ENCODE measurements at regions of chr3 and their contacts with region 1.

Region 1: DNA sequence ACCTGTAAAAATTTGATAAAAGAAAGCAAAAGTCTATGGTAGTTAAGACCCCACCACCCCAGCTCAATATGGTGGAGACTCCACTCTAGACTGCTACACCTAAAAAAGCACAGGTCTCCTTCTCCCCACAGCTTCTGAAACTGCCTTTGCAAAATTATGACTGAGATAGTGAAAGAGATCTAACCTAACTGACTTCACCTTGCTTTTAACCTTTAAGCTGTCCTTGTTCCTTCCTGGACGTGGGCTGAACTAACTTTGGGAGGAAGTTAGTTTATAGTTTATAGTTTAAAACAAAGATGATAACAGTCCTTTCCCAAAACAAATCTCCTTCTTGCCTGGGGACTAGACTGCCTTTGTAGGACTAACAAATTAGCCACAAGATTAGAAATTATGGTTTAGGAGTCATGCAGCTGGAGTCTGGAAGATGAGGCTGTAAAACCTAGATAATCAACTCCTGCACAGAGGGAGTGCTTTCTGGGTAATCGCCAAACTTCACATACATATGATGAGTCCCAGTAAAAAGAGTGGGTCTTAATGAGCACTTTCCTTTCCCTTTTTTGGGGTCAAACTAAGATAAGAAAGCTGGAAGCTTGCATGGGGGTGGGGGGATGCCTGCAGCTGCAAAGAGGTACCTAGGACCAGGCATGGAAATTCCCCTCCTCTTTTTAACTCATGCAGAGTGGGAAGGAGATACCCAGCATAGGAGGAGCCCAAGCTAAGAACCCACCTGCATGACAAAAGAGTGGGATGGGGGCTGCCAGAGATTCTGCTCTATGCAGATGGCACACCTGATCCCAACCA is 17.5 kb downstream of the CCR8 start:
- DNase-seq: no peak
- H3K4me3 Mint-ChIP-seq: no peak overlapping the region
- H3K27ac Mint-ChIP-seq: peak overlapping the region; percentile 57
- H3K4me1 Mint-ChIP-seq: peaks cover 54% of the 10 kb centered on the region
- H3K27me3 Mint-ChIP-seq: no peaks in the 10 kb centered on the region

Region 2: DNA sequence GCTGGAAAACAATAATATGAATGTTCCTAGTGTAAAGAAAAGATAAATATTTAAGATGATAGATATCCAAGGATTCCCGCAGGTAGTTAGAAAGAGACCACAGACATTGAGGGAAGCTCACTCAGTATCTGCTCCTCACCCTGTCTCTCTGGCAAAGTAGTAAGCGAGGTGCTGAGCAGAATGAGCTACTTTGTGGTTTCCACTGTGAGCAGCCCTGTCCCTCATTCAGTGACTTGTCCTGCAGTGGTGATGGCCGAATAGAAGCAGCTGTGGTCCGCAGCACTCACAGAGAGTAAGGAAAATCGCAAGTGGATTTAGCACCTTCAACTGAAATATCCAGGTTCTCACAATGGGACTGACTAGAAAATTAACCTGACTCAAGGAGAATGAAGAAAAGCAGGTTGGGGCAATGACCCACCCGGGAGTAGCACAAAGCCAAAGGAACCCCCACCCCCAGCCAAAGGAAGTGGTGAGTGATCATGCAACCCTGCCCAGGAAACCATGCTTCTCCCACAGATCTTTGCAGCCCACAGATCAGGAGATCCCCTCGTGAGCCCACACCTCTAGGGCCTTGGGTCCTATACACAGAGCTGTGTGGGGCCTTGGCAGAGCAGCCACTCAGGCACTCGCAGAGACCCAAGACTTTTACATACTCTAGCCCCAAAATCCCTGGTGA is 14.4 kb after region 1 on chr3:
- CTCF ChIA-PET with region 1: interaction called, 8 read pairs
- POLR2A ChIA-PET with region 1: interaction called, 12 read pairs
- DNase-seq: peak; percentile 80
- H3K4me3 Mint-ChIP-seq: peak overlapping the region; percentile 51
- H3K27ac Mint-ChIP-seq: peak overlapping the region; percentile 81
- H3K4me1 Mint-ChIP-seq: peaks cover 68% of the 10 kb centered on the region
- H3K27me3 Mint-ChIP-seq: peaks cover 5% of the 10 kb centered on the region

Region 3: GRCh38 chr3:39378088-39378487 is 31.1 kb after region 1 on chr3:
- CTCF ChIA-PET with region 1: interaction called, 11 read pairs
- POLR2A ChIA-PET with region 1: interaction called, 3 read pairs
- DNase-seq: peak; percentile 73
- H3K4me3 Mint-ChIP-seq: no peak overlapping the region
- H3K27ac Mint-ChIP-seq: no peak overlapping the region
- H3K4me1 Mint-ChIP-seq: peaks cover 25% of the 10 kb centered on the region
- H3K27me3 Mint-ChIP-seq: no peaks in the 10 kb centered on the region

Region 4: DNA sequence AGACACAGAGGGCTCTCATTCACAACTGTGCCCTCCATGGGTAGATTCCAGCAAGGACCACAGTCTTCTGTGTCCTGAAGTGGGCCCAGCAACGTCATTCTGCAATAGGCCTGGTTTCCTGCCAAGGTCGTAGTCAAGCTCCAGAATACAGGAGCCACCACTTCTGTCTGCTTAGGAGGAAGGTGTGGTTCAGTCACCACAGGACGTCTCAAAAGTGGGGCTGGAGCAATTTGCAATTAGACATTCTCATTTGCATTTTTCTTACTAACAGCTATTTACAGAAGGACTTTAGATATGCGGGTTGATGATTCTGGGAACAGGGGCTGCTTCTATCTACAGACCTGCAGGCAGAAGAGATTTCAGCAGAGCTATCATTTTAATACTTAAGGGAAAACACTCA is 403.7 kb after region 1 on chr3:
- CTCF ChIA-PET with region 1: no interaction called
- POLR2A ChIA-PET with region 1: no interaction called
- DNase-seq: no peak
- H3K4me3 Mint-ChIP-seq: no peak overlapping the region
- H3K27ac Mint-ChIP-seq: no peak overlapping the region
- H3K4me1 Mint-ChIP-seq: no peaks in the 10 kb centered on the region
- H3K27me3 Mint-ChIP-seq: no peaks in the 10 kb centered on the region

Measured in activated CD4-positive, alpha-beta memory T cell treated with anti-CD3 and anti-CD28 coated beads, Interleukin-2, amount 10 ng/mL, durations not matched to agents 7 days and 5 days (primary cell).